A673 (cell line): ENCODE measurements at regions of chr9 and their contacts with region 1.

Region 1: GRCh38 chr9:124527781-124528180 is 20.6 kb upstream of the NR5A1 start:
- DNase-seq: no peak
- H3K4me3 ChIP-seq: no peak overlapping the region
- H3K27ac ChIP-seq: no peak overlapping the region
- H3K4me1 ChIP-seq: no peaks in the 10 kb centered on the region
- H3K27me3 ChIP-seq: no peaks in the 10 kb centered on the region
- CTCF ChIP-seq: no peak

Region 2: GRCh38 chr9:124593651-124594058 is 65.9 kb after region 1 on chr9:
- CTCF ChIA-PET with region 1: no interaction called
- POLR2A ChIA-PET with region 1: no interaction called
- intact Hi-C with region 1: no loop called
- DNase-seq: peak; percentile 45
- H3K4me3 ChIP-seq: no peak overlapping the region
- H3K27ac ChIP-seq: peak overlapping the region; percentile 65
- H3K4me1 ChIP-seq: peaks cover 49% of the 10 kb centered on the region
- H3K27me3 ChIP-seq: no peaks in the 10 kb centered on the region
- CTCF ChIP-seq: no peak

Region 3: DNA sequence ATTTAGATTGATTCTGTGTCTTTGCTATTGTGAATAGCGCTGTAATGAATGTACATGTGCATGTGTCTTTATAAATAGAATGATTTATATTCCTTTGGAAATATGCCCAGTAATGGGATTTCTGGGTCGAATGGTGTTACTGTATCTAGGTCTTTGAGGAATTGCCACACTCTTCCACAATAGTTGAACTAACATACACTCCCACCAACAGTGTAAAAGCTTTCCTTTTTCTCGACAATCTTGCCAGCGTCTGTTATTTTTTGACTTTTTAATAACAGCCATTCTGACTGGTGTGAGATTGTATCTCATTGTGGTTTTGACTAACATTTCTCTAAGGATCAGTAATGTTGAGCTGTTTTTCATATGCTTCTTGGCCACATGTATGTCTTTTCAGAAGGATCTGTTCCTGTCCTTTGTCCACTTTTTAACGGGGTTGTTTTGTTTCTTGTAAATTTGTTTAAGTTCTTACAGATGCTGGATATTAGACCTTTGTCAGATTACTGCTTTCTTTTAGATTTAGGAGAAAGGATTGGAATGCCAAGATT is 104.4 kb after region 1 on chr9:
- CTCF ChIA-PET with region 1: interaction called, 11 read pairs
- POLR2A ChIA-PET with region 1: no interaction called
- intact Hi-C with region 1: no loop called
- DNase-seq: peak; percentile 60
- H3K4me3 ChIP-seq: no peak overlapping the region
- H3K27ac ChIP-seq: peak overlapping the region; percentile 45
- H3K4me1 ChIP-seq: peaks cover 21% of the 10 kb centered on the region
- H3K27me3 ChIP-seq: no peaks in the 10 kb centered on the region
- CTCF ChIP-seq: no peak